ENCODE measurements at regions of chr12 and their contacts with region 1.

Region 1: GRCh38 chr12:53005986-53006809 is at the start of gene EIF4B:
- DNase-seq: peak; percentile 100
- H3K4me3 Mint-ChIP-seq: peak within 1 kb of the TSS; percentile 92
- H3K27ac Mint-ChIP-seq: peak within 1 kb of the TSS; percentile 93
- H3K4me1 Mint-ChIP-seq: peaks cover 47% of the 10 kb centered on the region
- H3K27me3 Mint-ChIP-seq: no peaks in the 10 kb centered on the region
- total RNA-seq, gene EIF4B: 813 to 821 TPM

Region 2: GRCh38 chr12:53047221-53048042 is 41.2 kb after region 1 on chr12:
- CTCF ChIA-PET with region 1: interaction called, 3 read pairs
- intact Hi-C with region 1: loop called (anchors 1 kb)
- DNase-seq: peak; percentile 59
- H3K4me3 Mint-ChIP-seq: peak overlapping the region; percentile 9
- H3K27ac Mint-ChIP-seq: no peak overlapping the region
- H3K4me1 Mint-ChIP-seq: peaks cover 26% of the 10 kb centered on the region
- H3K27me3 Mint-ChIP-seq: peaks cover 4% of the 10 kb centered on the region

Region 3: DNA sequence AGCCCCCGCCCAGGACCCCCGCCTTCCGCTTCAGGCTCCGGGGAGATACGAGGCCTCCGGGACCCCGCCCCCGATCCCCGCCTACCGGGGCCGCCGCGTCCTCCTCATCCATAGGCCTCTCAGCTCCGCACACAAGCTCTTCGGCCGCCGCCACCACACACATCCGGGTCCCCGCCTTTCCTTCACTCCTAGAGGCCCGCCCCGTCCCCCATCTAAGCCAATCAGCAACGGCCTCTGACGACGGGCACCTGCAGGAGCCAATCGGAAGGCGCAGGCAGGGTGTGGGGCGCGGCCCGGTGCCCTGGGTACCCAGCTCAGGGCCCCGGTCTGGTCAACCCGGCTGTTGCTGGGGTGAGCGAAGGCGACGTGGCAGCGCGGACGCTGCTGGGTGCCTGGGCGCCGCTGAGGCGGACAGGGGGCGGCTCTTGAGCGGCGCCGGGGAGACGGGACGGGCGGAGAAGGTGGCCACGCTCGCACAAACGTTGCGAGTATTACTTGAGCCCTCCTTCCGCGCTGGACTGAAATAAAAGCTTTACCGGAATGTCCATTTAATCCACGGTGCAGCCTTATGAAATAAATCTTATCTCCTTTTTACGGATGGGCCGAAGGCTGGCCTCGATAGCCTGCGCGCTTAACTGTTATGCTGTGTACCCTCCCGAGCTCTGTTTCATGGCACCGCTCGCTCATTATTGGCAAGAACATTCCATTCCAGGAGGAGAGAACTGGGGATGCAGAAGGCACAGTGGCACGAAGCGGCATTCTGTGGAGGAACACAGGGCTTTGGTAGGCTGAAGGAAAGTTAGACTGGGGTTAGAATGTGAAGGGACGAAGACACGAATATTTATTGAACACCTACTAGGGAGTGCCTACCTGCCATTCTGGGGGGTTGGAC is 73.3 kb after region 1 on chr12 and contains the start of gene SPRYD3:
- CTCF ChIA-PET with region 1: no interaction called
- intact Hi-C with region 1: loop called (anchors 1 kb)
- DNase-seq: peak; percentile 98
- H3K4me3 Mint-ChIP-seq: peak within 1 kb of the TSS; percentile 88
- H3K27ac Mint-ChIP-seq: peak within 1 kb of the TSS; percentile 85
- H3K4me1 Mint-ChIP-seq: peaks cover 31% of the 10 kb centered on the region
- H3K27me3 Mint-ChIP-seq: no peaks in the 10 kb centered on the region
- total RNA-seq, gene SPRYD3: 20.1 to 20.2 TPM

Region 4: GRCh38 chr12:53379389-53380103 is 373.3 kb after region 1 on chr12:
- CTCF ChIA-PET with region 1: no interaction called
- intact Hi-C with region 1: loop called (anchors 1 kb)
- DNase-seq: peak; percentile 99
- H3K4me3 Mint-ChIP-seq: no peak overlapping the region
- H3K27ac Mint-ChIP-seq: no peak overlapping the region
- H3K4me1 Mint-ChIP-seq: peaks cover 48% of the 10 kb centered on the region
- H3K27me3 Mint-ChIP-seq: no peaks in the 10 kb centered on the region

Region 5: DNA sequence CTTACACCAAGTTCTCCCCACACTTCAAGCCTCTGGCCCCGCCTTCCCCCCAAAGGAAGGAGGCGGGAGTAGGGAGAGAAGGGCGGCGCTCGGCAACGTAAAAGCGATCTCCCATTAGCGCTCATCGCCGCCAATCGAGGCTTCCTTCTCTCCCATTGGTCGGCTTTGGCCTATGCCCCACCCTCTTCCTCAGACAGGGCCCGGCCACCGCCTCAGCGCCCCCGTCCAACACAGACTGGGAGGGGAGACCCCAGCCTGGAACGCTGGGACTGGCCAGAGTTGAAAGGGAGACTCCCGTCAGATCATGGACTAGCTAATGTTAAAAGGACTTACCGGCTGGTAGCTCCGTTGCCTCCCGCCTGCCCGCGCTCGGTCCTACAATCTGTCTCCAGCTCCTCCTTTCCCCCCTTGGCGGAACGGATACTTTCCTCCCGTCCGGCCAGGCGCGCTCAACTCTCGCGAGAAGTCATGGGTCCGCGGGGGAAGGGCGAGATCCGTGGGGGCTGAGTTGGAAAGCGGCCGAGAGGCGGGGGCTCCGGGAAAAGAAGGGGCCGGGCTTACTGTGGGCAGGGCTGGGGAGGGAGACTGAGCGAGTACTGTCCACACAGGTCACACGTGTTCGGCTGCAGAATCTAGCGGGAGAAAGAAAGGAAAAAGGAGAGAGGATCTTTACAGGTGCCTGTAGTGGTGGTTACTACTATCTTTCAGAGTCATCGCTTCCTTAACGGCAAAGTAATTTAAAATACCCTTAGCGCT is 619.9 kb after region 1 on chr12 and contains the start of gene ATF7:
- CTCF ChIA-PET with region 1: no interaction called
- intact Hi-C with region 1: loop called (anchors 2 kb)
- DNase-seq: peak; percentile 99
- H3K4me3 Mint-ChIP-seq: peak within 1 kb of the TSS; percentile 97
- H3K27ac Mint-ChIP-seq: peak within 1 kb of the TSS; percentile 96
- H3K4me1 Mint-ChIP-seq: peaks cover 44% of the 10 kb centered on the region
- H3K27me3 Mint-ChIP-seq: no peaks in the 10 kb centered on the region
- total RNA-seq, gene ATF7: 19.7 to 19.8 TPM